ENCODE measurements at regions of chr7 and their contacts with region 1.

Region 1: GRCh38 chr7:5494683-5495561 is 71.3 kb upstream of the TNRC18 start:
- DNase-seq: peak; percentile 86 to 88
- ATAC-seq: peak; percentile 80 to 87
- H3K4me3 ChIP-seq: no peak overlapping the region
- H3K27ac ChIP-seq: peak overlapping the region; percentile 66 to 81
- H3K4me1 ChIP-seq: peaks cover 24% of the 10 kb centered on the region
- CTCF ChIP-seq: peak; percentile 93
- EP300 ChIP-seq: no peak
- POLR2A ChIP-seq: no peak
- RAD21 ChIP-seq: peak; percentile 98

Region 2: DNA sequence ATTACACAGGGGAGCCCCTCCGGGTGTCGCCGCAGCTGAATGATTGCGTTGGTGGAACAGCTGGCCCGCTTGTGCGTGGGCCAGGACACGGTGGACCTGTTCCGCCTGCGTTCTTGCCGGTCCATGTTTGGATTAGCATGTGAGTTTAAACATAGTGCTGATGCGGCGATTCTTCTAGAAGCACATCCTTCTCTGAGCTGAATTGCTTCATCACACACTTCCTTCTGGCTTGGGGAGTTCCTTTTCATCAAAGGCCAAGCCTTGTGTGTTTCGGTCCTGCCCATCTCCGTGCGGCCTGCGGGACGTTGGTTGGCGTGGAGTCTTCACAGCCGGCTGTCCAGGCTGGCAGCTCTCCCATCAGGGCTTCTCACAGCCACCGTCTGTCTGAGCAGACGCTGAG is 257.6 kb before region 1 on chr7:
- CTCF ChIA-PET with region 1: interaction called, 13 read pairs
- POLR2A ChIA-PET with region 1: no interaction called
- DNase-seq: no peak
- ATAC-seq: no peak
- H3K4me3 ChIP-seq: no peak overlapping the region
- H3K27ac ChIP-seq: no peak overlapping the region
- H3K4me1 ChIP-seq: no peaks in the 10 kb centered on the region
- CTCF ChIP-seq: no peak
- EP300 ChIP-seq: no peak
- POLR2A ChIP-seq: no peak
- RAD21 ChIP-seq: no peak

Region 3: DNA sequence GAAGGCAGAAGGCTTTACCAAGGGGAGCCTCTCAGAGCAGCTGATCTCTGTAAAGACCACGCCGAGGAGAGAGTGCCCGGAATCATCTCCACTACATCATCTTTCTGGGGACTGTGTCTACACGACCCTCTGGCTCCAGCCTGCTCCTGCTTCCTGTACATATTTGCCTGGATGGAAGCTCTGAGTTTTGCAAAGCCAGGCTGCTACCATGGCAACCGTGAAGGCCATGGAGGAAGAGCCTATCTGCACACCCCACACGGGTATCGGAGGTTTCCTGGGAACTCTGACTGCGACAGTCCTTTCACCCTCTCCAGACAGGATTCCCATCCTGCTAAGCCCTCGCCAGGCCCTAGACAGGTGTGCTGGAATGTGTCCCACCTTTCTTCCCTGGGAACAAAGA is 12.1 kb after region 1 on chr7:
- CTCF ChIA-PET with region 1: interaction called, 58 read pairs
- POLR2A ChIA-PET with region 1: no interaction called
- DNase-seq: no peak
- ATAC-seq: peak; percentile 19 to 45; a peak in 4 of 6 replicates
- H3K4me3 ChIP-seq: no peak overlapping the region
- H3K27ac ChIP-seq: 0 out of 6 replicates have a peak overlapping the region, but pooled peaks of 1 of the 2 experiments have one; percentile 26
- H3K4me1 ChIP-seq: peaks cover 31% of the 10 kb centered on the region
- CTCF ChIP-seq: no peak
- EP300 ChIP-seq: no peak
- POLR2A ChIP-seq: no peak
- RAD21 ChIP-seq: no peak

Region 4: DNA sequence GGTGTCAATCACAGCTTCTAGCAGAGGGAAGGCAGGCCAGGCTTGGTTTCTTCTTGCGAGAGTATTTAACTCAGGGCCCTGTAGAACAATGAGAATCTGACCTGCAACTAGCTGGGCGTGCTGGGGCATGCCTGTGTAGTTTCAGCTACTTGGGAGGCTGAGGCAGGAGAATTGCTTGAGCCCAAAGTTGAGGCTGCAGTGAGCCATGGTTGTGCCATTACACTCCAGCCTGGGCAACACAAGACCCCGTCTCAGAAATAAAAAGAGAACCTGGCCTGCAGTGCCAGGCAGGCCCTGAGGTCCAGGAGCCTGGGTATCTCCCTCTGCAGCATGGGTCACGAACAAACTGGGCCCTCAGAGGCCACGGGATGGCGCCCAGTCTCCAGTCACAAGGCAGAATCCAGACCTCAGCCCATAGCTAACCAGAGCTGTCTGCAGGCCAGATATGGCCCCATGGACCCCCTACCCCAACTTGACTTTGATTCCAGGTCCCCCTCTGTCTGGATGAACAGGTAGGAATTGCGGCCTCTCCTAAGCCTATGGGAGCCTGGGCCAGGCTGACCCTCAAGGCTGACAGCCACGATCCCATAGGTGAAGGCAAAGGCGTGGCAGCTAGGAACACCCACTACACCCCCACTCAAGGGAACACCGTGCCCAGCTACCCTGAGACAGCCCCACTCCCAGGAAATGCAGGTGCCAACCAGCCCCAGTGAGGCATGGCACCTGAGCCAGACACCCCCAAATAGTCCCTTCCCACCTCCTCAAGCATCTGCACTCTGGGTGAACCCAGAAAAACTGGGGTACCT is 31.4 kb after region 1 on chr7:
- CTCF ChIA-PET with region 1: interaction called, 71 read pairs
- POLR2A ChIA-PET with region 1: interaction called, 6 read pairs
- DNase-seq: peak in 1 of 2 experiments; percentile 66
- ATAC-seq: peak in 1 of 2 experiments; percentile 4; a peak in 1 of 6 replicates
- H3K4me3 ChIP-seq: peak overlapping the region; percentile 89
- H3K27ac ChIP-seq: peak overlapping the region; percentile 99 to 100
- H3K4me1 ChIP-seq: peaks cover 20% of the 10 kb centered on the region
- CTCF ChIP-seq: peak; percentile 20; the same call in 2 of the 3 replicates
- EP300 ChIP-seq: no peak
- POLR2A ChIP-seq: peak; percentile 20; the same call in 1 of the 2 replicates
- RAD21 ChIP-seq: peak in 1 of 2 experiments; percentile 16; a peak in 2 of 5 replicates

Region 5: DNA sequence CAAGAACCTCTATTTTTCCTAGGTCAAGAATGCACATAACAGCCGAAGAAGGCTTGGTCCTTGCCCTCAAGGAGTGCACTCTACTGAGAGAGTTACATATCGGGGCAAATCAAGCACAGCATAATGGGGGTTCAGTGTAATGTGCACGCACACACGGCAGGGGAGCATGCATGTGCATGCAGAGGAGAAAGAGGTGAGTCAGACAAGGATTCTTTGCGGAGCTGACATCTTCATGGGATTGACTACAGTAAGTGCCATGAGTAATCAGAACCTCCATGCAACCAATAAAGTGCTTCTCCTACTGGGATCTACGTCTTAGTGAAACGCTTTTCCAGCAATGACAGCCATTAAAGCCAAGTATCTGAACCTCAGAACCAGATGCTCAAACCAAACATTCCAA is 163.0 kb after region 1 on chr7:
- CTCF ChIA-PET with region 1: interaction called, 86 read pairs
- POLR2A ChIA-PET with region 1: interaction called, 3 read pairs
- DNase-seq: no peak
- ATAC-seq: no peak
- H3K4me3 ChIP-seq: no peak overlapping the region
- H3K27ac ChIP-seq: no peak overlapping the region
- H3K4me1 ChIP-seq: no peaks in the 10 kb centered on the region
- CTCF ChIP-seq: no peak
- EP300 ChIP-seq: no peak
- POLR2A ChIP-seq: no peak
- RAD21 ChIP-seq: no peak

Region 6: DNA sequence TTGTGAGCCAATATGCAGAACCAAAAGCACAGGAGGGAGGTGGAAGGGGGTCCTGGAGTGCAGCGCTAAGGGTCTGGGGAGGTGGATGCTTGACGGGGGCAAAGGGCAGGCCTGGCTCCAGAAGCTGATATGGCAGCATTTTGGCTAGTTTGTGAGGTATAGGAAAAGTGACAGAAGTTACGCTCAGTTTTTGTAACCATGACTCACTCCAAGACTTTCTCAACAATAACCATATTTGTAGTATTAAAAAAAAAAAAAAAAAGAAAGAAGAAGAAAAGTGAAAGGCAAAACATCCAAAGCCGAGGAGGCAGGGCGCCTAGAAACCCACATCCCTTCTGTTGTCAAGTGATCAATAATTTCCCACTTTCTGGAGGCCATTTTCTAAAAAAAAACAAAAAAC is 194.2 kb after region 1 on chr7:
- CTCF ChIA-PET with region 1: interaction called, 20 read pairs
- POLR2A ChIA-PET with region 1: no interaction called
- DNase-seq: no peak
- ATAC-seq: no peak
- H3K4me3 ChIP-seq: no peak overlapping the region
- H3K27ac ChIP-seq: peak overlapping the region; percentile 41 to 86; a peak in 4 of 6 replicates
- H3K4me1 ChIP-seq: peaks cover 62% of the 10 kb centered on the region
- CTCF ChIP-seq: no peak
- EP300 ChIP-seq: no peak
- POLR2A ChIP-seq: no peak
- RAD21 ChIP-seq: no peak

Region 7: DNA sequence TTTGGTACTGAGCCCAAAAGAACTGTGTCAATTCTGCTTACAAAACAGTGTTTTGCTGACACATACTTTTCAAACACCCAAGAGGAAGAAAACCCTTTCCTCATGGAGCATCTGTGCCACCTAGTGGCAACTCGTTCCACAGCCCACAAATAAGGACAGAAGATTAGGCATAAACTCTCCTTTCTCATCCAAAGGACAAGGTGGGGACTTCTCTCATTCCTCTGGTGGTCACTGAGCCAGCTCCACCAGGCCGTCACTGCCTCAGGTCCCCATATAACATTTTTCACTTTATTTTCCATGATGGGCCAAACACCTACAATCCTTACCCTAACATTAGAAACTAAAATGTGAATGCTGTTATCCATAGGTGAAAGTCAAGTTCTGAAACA is 209.6 kb after region 1 on chr7:
- CTCF ChIA-PET with region 1: interaction called, 14 read pairs
- POLR2A ChIA-PET with region 1: no interaction called
- DNase-seq: peak; percentile 71 to 77
- ATAC-seq: peak; percentile 87 to 89
- H3K4me3 ChIP-seq: no peak overlapping the region
- H3K27ac ChIP-seq: peak overlapping the region in 1 of 2 experiments; percentile 41; a peak in 4 of 6 replicates
- H3K4me1 ChIP-seq: peaks cover 38% of the 10 kb centered on the region
- CTCF ChIP-seq: peak; percentile 97
- EP300 ChIP-seq: no peak
- POLR2A ChIP-seq: no peak
- RAD21 ChIP-seq: peak; percentile 92 to 96